Prostate gland (tissue), 2 donors: ENCODE measurements at regions of chr1 and their contacts with region 1.

Region 1: GRCh38 chr1:84573967-84574842 is at the start of gene CTBS:
- DNase-seq: peak; percentile 82
- H3K4me3 ChIP-seq: peak within 1 kb of the TSS; percentile 60 to 70
- H3K27ac ChIP-seq: peak within 1 kb of the TSS; percentile 97 to 98
- H3K4me1 ChIP-seq: no peaks in the 10 kb centered on the region
- H3K27me3 ChIP-seq: no peaks in the 10 kb centered on the region
- CTCF ChIP-seq: no peak
- POLR2A ChIP-seq: peak; percentile 67
- total RNA-seq, gene CTBS: 15.1 to 45.5 TPM

Region 2: GRCh38 chr1:84260864-84261518 is 313.2 kb before region 1 on chr1:
- intact Hi-C with region 1: no loop called
- DNase-seq: no peak
- H3K4me3 ChIP-seq: no peak overlapping the region
- H3K27ac ChIP-seq: no peak overlapping the region
- H3K4me1 ChIP-seq: peaks cover 3% of the 10 kb centered on the region
- H3K27me3 ChIP-seq: no peaks in the 10 kb centered on the region
- CTCF ChIP-seq: no peak
- POLR2A ChIP-seq: no peak

Region 3: GRCh38 chr1:84406346-84406861 is 167.8 kb before region 1 on chr1:
- intact Hi-C with region 1: no loop called
- DNase-seq: no peak
- H3K4me3 ChIP-seq: no peak overlapping the region
- H3K27ac ChIP-seq: peak overlapping the region in 1 of 2 donors; percentile 51
- H3K4me1 ChIP-seq: peaks cover 8% of the 10 kb centered on the region
- H3K27me3 ChIP-seq: no peaks in the 10 kb centered on the region
- CTCF ChIP-seq: no peak
- POLR2A ChIP-seq: no peak

Region 4: GRCh38 chr1:84478876-84479868 is 95.0 kb before region 1 on chr1 and contains the start of gene RPF1:
- intact Hi-C with region 1: loop called (anchors 2 kb)
- DNase-seq: peak; percentile 61
- H3K4me3 ChIP-seq: peak within 1 kb of the TSS; percentile 65 to 76
- H3K27ac ChIP-seq: peak within 1 kb of the TSS; percentile 81 to 87
- H3K4me1 ChIP-seq: peaks cover 3% of the 10 kb centered on the region
- H3K27me3 ChIP-seq: peaks cover 3% of the 10 kb centered on the region
- CTCF ChIP-seq: no peak
- POLR2A ChIP-seq: peak; percentile 36
- total RNA-seq, gene RPF1: 38.4 TPM

Region 5: DNA sequence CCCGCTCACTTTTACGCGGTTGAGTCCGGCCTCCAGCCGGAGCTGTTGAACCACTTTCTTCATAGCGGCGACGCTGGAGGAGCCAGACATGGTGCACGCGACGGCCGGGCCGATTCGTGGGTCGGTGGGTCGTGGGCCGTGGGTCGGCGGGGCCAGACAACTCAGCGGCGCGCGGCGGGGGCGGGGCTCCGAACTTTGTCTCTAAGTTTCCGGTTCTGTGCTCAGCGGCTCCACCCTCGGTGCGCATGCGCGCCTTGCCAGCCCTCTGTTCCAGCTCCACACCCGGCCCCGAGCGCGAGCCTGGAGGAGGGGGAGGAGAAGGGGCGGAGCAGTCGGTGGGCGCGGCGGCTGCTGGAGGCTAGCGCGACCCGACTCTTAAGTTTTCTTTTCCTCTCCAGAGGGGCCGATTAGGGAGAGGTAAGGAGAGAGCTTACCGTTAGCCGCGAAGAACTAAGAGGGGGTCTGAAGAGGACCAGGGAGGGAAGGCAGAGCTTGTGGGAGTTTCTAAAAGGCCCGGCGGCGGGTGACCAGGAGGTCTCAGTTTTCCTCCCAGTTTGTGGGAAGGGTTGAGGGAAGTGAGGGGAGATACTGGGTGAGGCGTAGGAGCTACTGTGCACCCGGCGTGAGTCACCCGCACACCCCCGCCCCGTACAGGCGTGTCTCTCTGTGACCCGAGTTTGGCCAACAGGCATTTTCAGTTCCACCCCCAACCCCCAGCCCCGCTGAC is 68.0 kb before region 1 on chr1 and contains the starts of genes GNG5 and SPATA1:
- intact Hi-C with region 1: loop called (anchors 5 kb)
- DNase-seq: peak; percentile 98
- H3K4me3 ChIP-seq: peak within 1 kb of the TSS; percentile 59 to 83
- H3K27ac ChIP-seq: peak within 1 kb of the TSS; percentile 95 to 96
- H3K4me1 ChIP-seq: peaks cover 2% of the 10 kb centered on the region
- H3K27me3 ChIP-seq: no peaks in the 10 kb centered on the region
- CTCF ChIP-seq: peak in 1 of 4 experiments; percentile 10
- POLR2A ChIP-seq: peak; percentile 79
- total RNA-seq, gene GNG5: 111 to 116 TPM
- total RNA-seq, gene SPATA1: 0.05 to 3.8 TPM

Region 6: GRCh38 chr1:84644472-84644871 is 70.3 kb after region 1 on chr1:
- intact Hi-C with region 1: no loop called
- DNase-seq: no peak
- H3K4me3 ChIP-seq: no peak overlapping the region
- H3K27ac ChIP-seq: no peak overlapping the region
- H3K4me1 ChIP-seq: no peaks in the 10 kb centered on the region
- H3K27me3 ChIP-seq: no peaks in the 10 kb centered on the region
- CTCF ChIP-seq: no peak
- POLR2A ChIP-seq: no peak